ENCODE measurements at regions of chr20 and their contacts with region 1.

Region 1: GRCh38 chr20:39574061-39574460 is 611.9 kb downstream of the DHX35 start:
- DNase-seq: no peak
- ATAC-seq: no peak
- H3K4me3 ChIP-seq: no peak overlapping the region
- H3K27ac ChIP-seq: no peak overlapping the region
- H3K4me1 ChIP-seq: no peaks in the 10 kb centered on the region
- H3K27me3 ChIP-seq: no peaks in the 10 kb centered on the region
- CTCF ChIP-seq: no peak

Region 2: GRCh38 chr20:39588148-39588757 is 14.2 kb after region 1 on chr20:
- CTCF ChIA-PET with region 1: no interaction called
- POLR2A ChIA-PET with region 1: interaction called, 10 read pairs
- in situ Hi-C with region 1: no loop called
- intact Hi-C with region 1: no loop called
- DNase-seq: no peak
- ATAC-seq: no peak
- H3K4me3 ChIP-seq: no peak overlapping the region
- H3K27ac ChIP-seq: no peak overlapping the region
- H3K4me1 ChIP-seq: no peaks in the 10 kb centered on the region
- H3K27me3 ChIP-seq: no peaks in the 10 kb centered on the region
- CTCF ChIP-seq: no peak

Measured in Panc1 (cell line).